ENCODE measurements at regions of chr2 and their contacts with region 1.

Region 1: DNA sequence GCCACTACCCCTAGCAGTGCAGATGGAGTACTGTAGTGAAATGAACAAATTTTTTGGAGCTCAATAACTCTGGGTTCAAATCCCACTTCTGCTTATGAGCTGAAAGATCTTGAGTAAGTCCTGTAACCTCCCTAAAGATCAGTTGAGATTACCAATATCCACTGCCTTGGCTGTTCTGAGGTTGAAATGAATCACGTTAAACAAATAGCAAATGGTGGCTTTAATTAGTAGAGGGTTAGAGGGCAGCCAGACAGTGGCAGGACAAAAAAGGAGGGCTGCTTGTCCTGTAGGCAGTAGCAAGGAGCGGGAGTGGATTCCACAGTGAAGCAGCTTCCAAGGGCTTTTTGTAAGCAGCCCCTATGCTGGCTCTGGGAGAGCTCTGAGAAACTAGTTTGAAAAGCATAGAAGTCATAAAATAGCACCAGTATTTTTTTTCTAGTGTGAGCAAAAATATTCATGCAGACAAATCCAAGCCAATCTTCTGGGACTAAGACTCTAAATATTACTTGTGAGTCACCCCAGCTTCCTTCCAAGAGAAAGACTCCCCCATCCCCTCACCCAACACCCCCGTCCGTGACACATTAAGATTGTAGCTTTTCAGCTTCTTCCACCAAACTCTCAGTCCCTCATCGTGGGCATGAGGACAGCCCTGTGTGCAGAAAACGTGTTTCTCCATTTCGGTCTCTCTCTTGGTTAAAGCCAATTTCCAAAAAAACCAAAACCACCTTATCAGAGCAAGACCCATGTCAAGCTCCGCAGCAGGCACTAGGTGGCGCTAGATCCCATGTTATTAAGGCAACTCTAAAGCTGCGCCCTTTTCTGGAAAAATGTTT is 123.5 kb upstream of the LGALSL start:
- DNase-seq: peak; percentile 88
- ATAC-seq: peak; percentile 82
- H3K4me3 ChIP-seq: peak overlapping the region; percentile 43
- H3K27ac ChIP-seq: no peak overlapping the region
- H3K4me1 ChIP-seq: peaks cover 6% of the 10 kb centered on the region; the same call in 1 of the 2 replicates
- H3K27me3 ChIP-seq: peaks cover 11% of the 10 kb centered on the region
- CTCF ChIP-seq: peak; percentile 93
- POLR2A ChIP-seq: no peak
- RAD21 ChIP-seq: peak; percentile 92

Region 2: DNA sequence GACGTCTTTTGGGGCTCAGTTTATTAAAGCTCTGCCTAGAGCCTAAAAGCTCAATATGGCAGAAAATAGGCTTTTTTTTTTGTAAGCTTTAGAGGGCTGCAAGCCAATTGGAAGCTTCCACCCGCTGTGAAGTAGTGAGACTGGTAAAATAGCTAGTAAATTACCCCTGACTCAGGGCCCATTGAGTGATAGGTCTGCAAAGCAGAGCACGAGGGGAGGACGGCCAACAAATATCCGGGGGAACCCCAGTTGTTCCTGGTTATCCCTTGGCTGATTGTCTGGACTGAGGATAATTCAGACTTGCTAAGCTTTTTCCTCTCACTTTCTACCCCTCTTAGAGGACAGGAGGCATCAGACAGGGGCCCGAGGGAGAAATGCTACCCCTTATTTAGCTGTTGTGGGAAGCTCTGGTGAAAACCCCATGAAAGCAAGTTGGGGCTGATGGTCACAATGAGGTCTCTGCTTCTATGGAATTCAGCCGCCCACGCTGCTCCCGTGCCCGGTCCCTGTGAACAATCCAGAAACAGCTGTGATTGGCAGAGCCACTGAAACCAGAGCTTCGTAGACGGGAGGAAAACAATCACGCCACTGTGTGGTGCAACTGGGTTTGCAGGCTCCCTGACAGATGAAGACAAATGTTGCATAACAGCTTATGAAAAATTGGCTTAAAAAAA is 18.4 kb before region 1 on chr2:
- CTCF ChIA-PET with region 1: interaction called, 11 read pairs
- POLR2A ChIA-PET with region 1: no interaction called
- dilution Hi-C with region 1: no loop called
- in situ Hi-C with region 1: no loop called
- intact Hi-C with region 1: no loop called
- DNase-seq: peak; percentile 78
- ATAC-seq: peak; percentile 91
- H3K4me3 ChIP-seq: no peak overlapping the region
- H3K27ac ChIP-seq: no peak overlapping the region
- H3K4me1 ChIP-seq: peaks cover 3% of the 10 kb centered on the region
- H3K27me3 ChIP-seq: peaks cover 28% of the 10 kb centered on the region
- CTCF ChIP-seq: peak; percentile 51
- POLR2A ChIP-seq: no peak
- RAD21 ChIP-seq: peak; percentile 58

Region 3: GRCh38 chr2:64562148-64562784 is 231.8 kb after region 1 on chr2:
- CTCF ChIA-PET with region 1: interaction called, 4 read pairs
- POLR2A ChIA-PET with region 1: no interaction called
- dilution Hi-C with region 1: no loop called
- in situ Hi-C with region 1: loop called (anchors 5 kb)
- intact Hi-C with region 1: loop called (anchors 2 kb)
- DNase-seq: peak; percentile 22
- ATAC-seq: no peak
- H3K4me3 ChIP-seq: no peak overlapping the region
- H3K27ac ChIP-seq: no peak overlapping the region
- H3K4me1 ChIP-seq: no peaks in the 10 kb centered on the region
- H3K27me3 ChIP-seq: no peaks in the 10 kb centered on the region
- CTCF ChIP-seq: peak; percentile 58
- POLR2A ChIP-seq: no peak
- RAD21 ChIP-seq: peak; percentile 60

Region 4: DNA sequence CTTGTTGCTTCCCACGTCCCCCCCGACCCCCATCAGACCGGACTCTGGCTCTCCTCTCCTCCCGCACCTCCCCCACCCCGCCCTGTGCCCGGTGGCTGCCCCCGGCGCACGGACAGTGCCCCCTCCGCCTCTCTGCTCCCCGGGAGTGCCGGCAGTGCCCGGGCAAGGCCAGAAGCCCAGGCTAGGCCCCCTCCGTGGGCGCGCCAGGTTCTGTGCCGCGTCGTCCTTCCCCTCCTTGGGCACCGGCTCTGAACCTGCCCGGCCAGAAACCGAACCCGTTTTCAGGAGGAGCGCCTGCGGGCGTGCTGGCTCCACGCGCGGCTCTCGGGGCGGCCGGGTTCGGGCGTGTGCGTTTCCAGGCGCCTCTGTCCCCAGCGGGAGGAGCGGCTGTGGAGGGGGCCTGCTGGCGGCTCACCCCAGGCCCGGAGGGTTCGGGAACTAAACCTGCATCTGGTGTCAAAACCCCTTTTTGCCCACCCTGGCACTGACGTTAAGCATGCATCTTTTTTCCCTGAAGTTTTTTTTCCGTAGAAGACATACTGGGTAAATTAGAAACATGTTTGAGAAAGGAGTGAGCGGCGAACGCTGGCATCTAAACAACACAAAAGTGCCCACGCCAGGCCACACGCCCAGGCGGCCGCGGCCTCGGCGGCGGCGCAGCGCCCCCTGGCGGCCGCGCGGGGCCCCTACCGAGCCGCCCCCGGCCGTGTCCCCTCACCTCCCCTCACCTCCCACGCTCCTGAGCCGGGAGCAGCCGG is 534.8 kb after region 1 on chr2:
- CTCF ChIA-PET with region 1: no interaction called
- POLR2A ChIA-PET with region 1: no interaction called
- dilution Hi-C with region 1: no loop called
- in situ Hi-C with region 1: loop called (anchors 10 kb)
- intact Hi-C with region 1: loop called (anchors 2 kb)
- DNase-seq: peak; percentile 54
- ATAC-seq: peak; percentile 77
- H3K4me3 ChIP-seq: peak overlapping the region; percentile 58
- H3K27ac ChIP-seq: peak overlapping the region; percentile 3; the same call in 1 of the 2 replicates
- H3K4me1 ChIP-seq: peaks cover 13% of the 10 kb centered on the region
- H3K27me3 ChIP-seq: peaks cover 43% of the 10 kb centered on the region
- CTCF ChIP-seq: peak; percentile 83
- POLR2A ChIP-seq: no peak
- RAD21 ChIP-seq: peak; percentile 90

Region 5: GRCh38 chr2:65040400-65041261 is 710.1 kb after region 1 on chr2:
- CTCF ChIA-PET with region 1: no interaction called
- POLR2A ChIA-PET with region 1: no interaction called
- dilution Hi-C with region 1: no loop called
- in situ Hi-C with region 1: loop called (anchors 25 kb)
- intact Hi-C with region 1: no loop called
- DNase-seq: peak; percentile 84
- ATAC-seq: peak; percentile 100
- H3K4me3 ChIP-seq: peak overlapping the region; percentile 26; the same call in 1 of the 2 replicates
- H3K27ac ChIP-seq: no peak overlapping the region
- H3K4me1 ChIP-seq: no peaks in the 10 kb centered on the region
- H3K27me3 ChIP-seq: no peaks in the 10 kb centered on the region
- CTCF ChIP-seq: peak; percentile 89
- POLR2A ChIP-seq: no peak
- RAD21 ChIP-seq: peak; percentile 93

Measured in IMR-90 (cell line).